Sigmoid colon (tissue), 7 donors: ENCODE measurements at regions of chr7 and their contacts with region 1.

Region 1: GRCh38 chr7:95690367-95690947 is 81.9 kb upstream of the DYNC1I1 start:
- DNase-seq: no peak
- H3K4me3 ChIP-seq: no peak overlapping the region
- H3K27ac ChIP-seq: no peak overlapping the region
- H3K4me1 ChIP-seq: peaks cover 0 to 10% (median 2%) of the 10 kb centered on the region in 4 donors
- H3K27me3 ChIP-seq: no peaks in the 10 kb centered on the region
- CTCF ChIP-seq: peak; percentile 53 to 63 (median 60)
- EP300 ChIP-seq: no peak
- POLR2A ChIP-seq: no peak

Region 2: GRCh38 chr7:94591176-94591575 is 1099.3 kb before region 1 on chr7:
- intact Hi-C with region 1: no loop called
- DNase-seq: no peak
- H3K4me3 ChIP-seq: no peak overlapping the region
- H3K27ac ChIP-seq: no peak overlapping the region
- H3K4me1 ChIP-seq: no peaks in the 10 kb centered on the region
- H3K27me3 ChIP-seq: no peaks in the 10 kb centered on the region
- CTCF ChIP-seq: no peak
- EP300 ChIP-seq: no peak
- POLR2A ChIP-seq: no peak

Region 3: GRCh38 chr7:95511716-95512260 is 178.7 kb before region 1 on chr7:
- intact Hi-C with region 1: loop called (anchors 1 kb)
- DNase-seq: peak; percentile 84
- H3K4me3 ChIP-seq: no peak overlapping the region
- H3K27ac ChIP-seq: no peak overlapping the region
- H3K4me1 ChIP-seq: no peaks in the 10 kb centered on the region
- H3K27me3 ChIP-seq: no peaks in the 10 kb centered on the region
- CTCF ChIP-seq: peak; percentile 69 to 92 (median 86)
- EP300 ChIP-seq: no peak
- POLR2A ChIP-seq: no peak

Region 4: DNA sequence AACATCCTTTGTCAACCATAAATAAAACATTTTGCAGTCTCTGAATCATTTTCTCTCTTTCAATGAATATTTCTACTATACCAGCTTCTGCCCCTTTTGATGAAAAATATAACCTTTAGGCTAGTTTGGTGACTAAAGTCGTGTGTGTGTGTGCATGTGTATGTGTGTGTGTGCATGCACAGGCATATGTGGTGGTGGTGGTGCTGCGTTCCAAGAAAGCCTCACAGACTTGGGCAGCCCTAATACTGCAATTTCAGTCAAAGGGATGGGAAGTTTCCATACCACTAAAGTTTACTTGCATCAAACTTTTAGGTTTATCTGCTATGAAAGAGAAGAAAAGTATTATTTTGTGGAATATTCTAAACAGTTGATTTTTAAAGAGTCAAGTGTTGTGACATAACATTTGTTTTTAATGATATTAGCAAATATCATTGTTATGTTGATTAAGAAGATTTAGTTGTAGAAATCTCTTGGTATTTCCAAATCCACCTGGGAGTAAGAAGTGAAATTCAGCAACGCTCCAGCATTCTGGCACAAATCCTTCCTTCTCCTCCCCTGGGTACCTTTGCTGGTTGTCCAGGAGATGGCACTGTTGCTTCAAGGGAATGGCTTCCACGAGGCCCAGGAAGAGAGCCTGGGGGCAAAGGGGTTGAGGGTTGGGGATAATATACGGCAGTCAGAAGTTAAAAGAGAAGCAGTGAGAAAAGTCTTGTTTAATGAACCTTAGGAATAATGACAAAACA is 163.3 kb before region 1 on chr7:
- intact Hi-C with region 1: loop called (anchors 1 kb)
- DNase-seq: peak; percentile 74
- H3K4me3 ChIP-seq: no peak overlapping the region
- H3K27ac ChIP-seq: no peak overlapping the region
- H3K4me1 ChIP-seq: peaks cover 0 to 19% (median 9%) of the 10 kb centered on the region in 4 donors
- H3K27me3 ChIP-seq: no peaks in the 10 kb centered on the region
- CTCF ChIP-seq: peak; percentile 83 to 94 (median 88)
- EP300 ChIP-seq: no peak
- POLR2A ChIP-seq: no peak

Region 5: GRCh38 chr7:95577137-95577536 is 113.3 kb before region 1 on chr7:
- intact Hi-C with region 1: no loop called
- DNase-seq: no peak
- H3K4me3 ChIP-seq: no peak overlapping the region
- H3K27ac ChIP-seq: no peak overlapping the region
- H3K4me1 ChIP-seq: no peaks in the 10 kb centered on the region
- H3K27me3 ChIP-seq: no peaks in the 10 kb centered on the region
- CTCF ChIP-seq: no peak
- EP300 ChIP-seq: no peak
- POLR2A ChIP-seq: no peak

Region 6: GRCh38 chr7:95798401-95798930 is 108.0 kb after region 1 on chr7:
- intact Hi-C with region 1: no loop called
- DNase-seq: no peak
- H3K4me3 ChIP-seq: no peak overlapping the region
- H3K27ac ChIP-seq: no peak overlapping the region
- H3K4me1 ChIP-seq: peaks cover 0 to 6% (median 0%) of the 10 kb centered on the region in 4 donors
- H3K27me3 ChIP-seq: no peaks in the 10 kb centered on the region
- CTCF ChIP-seq: no peak
- EP300 ChIP-seq: no peak
- POLR2A ChIP-seq: no peak